ENCODE measurements at regions of chr6 and their contacts with region 1.

Region 1: DNA sequence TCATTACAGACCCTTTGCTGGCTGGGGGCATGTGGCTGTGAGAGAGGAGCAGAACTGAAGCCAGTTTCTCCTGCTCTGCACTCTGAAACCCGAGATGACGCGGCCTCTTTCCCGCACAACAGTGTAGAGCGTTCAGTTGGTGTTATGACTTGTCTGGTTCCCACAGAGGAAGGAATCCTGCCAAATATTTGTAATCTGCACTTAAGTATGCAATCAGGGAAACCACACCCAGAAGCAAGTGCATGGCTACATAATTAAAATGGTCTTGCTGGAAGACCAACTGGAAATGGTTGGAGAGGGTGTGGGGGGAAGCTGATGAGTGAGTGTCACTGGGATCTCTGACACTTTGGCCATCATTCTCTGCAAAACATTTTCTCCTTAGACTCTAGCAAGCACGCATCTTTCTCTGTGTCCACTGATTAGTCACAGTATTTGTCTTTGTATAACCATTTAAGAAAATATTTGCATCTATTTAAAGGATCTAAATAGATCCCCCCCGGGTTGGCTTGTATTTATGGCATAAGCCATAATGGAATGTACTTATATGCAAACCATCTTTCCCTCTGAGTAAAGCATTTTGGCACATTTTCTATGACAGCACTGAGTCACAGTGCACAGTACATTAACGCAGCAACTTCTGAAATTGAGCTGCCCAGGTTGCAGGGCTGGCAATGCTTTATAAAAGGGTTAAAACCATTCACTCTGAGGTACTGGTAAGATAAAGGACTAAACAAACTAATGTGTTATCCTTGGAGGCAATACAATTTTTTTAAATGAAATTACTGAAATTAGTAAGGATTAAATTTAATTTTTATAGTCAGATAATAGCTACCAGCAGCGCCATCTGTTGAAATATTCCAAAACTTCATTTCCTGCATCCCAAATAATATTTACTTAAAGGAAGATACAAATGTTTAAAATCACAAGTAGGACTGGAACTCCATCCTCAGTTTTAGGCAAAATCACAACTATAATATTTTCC is 76.7 kb downstream of the FOXC1 start:
- DNase-seq: peak; percentile 71
- H3K4me3 ChIP-seq: no peak overlapping the region
- H3K27ac ChIP-seq: no peak overlapping the region
- H3K4me1 ChIP-seq: peaks cover 13% of the 10 kb centered on the region
- H3K27me3 ChIP-seq: no peaks in the 10 kb centered on the region
- CTCF ChIP-seq: peak; percentile 12 to 26
- POLR2A ChIP-seq: no peak

Region 2: DNA sequence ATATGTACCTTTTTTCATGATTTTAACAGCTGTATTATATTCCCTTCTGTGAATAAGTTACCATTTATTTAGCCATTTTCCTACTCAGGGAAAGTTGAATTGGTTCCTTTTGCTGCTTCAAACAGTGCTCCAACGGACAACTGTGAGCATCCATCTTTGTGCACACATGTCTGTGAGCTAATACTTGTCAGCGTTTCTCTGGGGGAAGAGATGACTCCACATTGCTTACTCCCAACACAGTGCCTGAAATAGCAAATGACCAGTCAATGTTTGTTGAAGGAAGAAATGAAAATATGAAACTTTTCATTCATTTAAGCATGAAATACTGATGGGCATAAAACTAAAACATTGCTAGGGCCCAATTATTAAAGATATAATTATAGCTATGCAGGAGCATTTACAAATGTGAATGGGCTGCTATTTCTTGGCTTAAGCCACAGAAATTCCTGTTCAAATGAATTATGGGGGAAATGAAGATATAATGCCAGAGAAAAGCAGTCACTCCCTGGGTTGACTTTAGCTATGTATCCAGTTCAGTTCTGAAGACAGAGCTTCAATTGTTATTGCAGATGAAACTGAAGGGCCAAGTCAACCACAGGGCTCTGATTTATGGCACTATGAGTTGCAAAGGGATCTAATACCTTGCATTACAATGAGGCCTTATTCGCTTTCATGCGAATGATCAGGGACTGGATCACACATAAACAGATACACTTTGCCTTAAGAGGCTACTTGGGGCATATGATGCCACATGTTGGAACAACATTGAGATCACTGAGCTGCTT is 124.0 kb before region 1 on chr6:
- CTCF ChIA-PET with region 1: no interaction called
- POLR2A ChIA-PET with region 1: no interaction called
- dilution Hi-C with region 1: no loop called
- intact Hi-C with region 1: no loop called
- DNase-seq: no peak
- H3K4me3 ChIP-seq: no peak overlapping the region
- H3K27ac ChIP-seq: no peak overlapping the region
- H3K4me1 ChIP-seq: no peaks in the 10 kb centered on the region
- H3K27me3 ChIP-seq: peaks cover 2 to 10% of the 10 kb centered on the region in 2 experiments
- CTCF ChIP-seq: no peak
- POLR2A ChIP-seq: no peak

Region 3: GRCh38 chr6:1619673-1620503 is 66.5 kb before region 1 on chr6:
- CTCF ChIA-PET with region 1: interaction called, 22 read pairs
- POLR2A ChIA-PET with region 1: no interaction called
- dilution Hi-C with region 1: no loop called
- intact Hi-C with region 1: loop called (anchors 5 kb)
- DNase-seq: peak; percentile 61
- H3K4me3 ChIP-seq: peak overlapping the region in 1 of 3 experiments; percentile 17
- H3K27ac ChIP-seq: no peak overlapping the region
- H3K4me1 ChIP-seq: peaks cover 45% of the 10 kb centered on the region
- H3K27me3 ChIP-seq: no peaks in the 10 kb centered on the region
- CTCF ChIP-seq: no peak
- POLR2A ChIP-seq: no peak

Region 4: GRCh38 chr6:1662534-1662933 is 23.9 kb before region 1 on chr6:
- CTCF ChIA-PET with region 1: interaction called, 11 read pairs
- POLR2A ChIA-PET with region 1: no interaction called
- dilution Hi-C with region 1: no loop called
- intact Hi-C with region 1: no loop called
- DNase-seq: no peak
- H3K4me3 ChIP-seq: no peak overlapping the region
- H3K27ac ChIP-seq: no peak overlapping the region
- H3K4me1 ChIP-seq: no peaks in the 10 kb centered on the region
- H3K27me3 ChIP-seq: no peaks in the 10 kb centered on the region
- CTCF ChIP-seq: no peak
- POLR2A ChIP-seq: no peak

Region 5: DNA sequence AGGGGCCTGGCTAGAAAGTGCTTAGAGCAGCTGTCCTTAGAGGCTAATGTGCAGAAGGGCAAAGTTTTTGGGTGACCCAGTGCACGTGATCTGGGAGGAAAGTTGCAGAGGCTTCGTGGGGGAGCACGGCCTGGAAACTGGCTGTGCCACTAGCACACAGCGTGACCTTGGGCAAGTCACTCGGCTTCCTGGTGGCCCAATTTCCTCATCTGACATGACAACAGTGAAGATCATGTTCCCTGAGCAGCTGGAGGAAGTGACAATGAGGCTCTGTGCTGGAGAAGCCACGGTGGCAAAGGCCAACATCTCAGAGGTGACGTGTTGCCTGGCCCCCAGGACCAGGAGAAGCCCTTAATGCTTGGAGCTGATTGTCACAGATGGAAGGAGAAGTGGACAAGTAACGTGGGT is 22.8 kb after region 1 on chr6:
- CTCF ChIA-PET with region 1: interaction called, 13 read pairs
- POLR2A ChIA-PET with region 1: no interaction called
- dilution Hi-C with region 1: no loop called
- intact Hi-C with region 1: no loop called
- DNase-seq: no peak
- H3K4me3 ChIP-seq: no peak overlapping the region
- H3K27ac ChIP-seq: no peak overlapping the region
- H3K4me1 ChIP-seq: no peaks in the 10 kb centered on the region
- H3K27me3 ChIP-seq: no peaks in the 10 kb centered on the region
- CTCF ChIP-seq: no peak
- POLR2A ChIP-seq: no peak

Region 6: GRCh38 chr6:1821513-1822183 is 135.2 kb after region 1 on chr6:
- CTCF ChIA-PET with region 1: interaction called, 6 read pairs
- POLR2A ChIA-PET with region 1: no interaction called
- dilution Hi-C with region 1: no loop called
- intact Hi-C with region 1: loop called (anchors 1 kb)
- DNase-seq: peak; percentile 89
- H3K4me3 ChIP-seq: no peak overlapping the region
- H3K27ac ChIP-seq: peak overlapping the region; percentile 65
- H3K4me1 ChIP-seq: peaks cover 37% of the 10 kb centered on the region
- H3K27me3 ChIP-seq: no peaks in the 10 kb centered on the region
- CTCF ChIP-seq: no peak
- POLR2A ChIP-seq: no peak

Measured in endothelial cell of umbilical vein (primary cell).